Esophagus squamous epithelium (tissue), 5 donors: ENCODE measurements at regions of chr2 and their contacts with region 1.

Region 1: GRCh38 chr2:218876562-218877219 is 4.0 kb upstream of the WNT10A start:
- DNase-seq: no peak
- H3K4me3 ChIP-seq: no peak overlapping the region
- H3K27ac ChIP-seq: no peak overlapping the region
- H3K4me1 ChIP-seq: peaks cover 14 to 47% (median 17%) of the 10 kb centered on the region in 3 donors
- H3K27me3 ChIP-seq: peaks cover 0 to 98% (median 7%) of the 10 kb centered on the region in 4 donors
- CTCF ChIP-seq: peak; percentile 87 to 98 (median 94)
- POLR2A ChIP-seq: no peak

Region 2: GRCh38 chr2:218896501-218897393 is 20.1 kb after region 1 on chr2:
- intact Hi-C with region 1: loop called (anchors 2 kb)
- DNase-seq: no peak
- H3K4me3 ChIP-seq: peak overlapping the region in 3 of 4 donors; percentile 2 to 42 (median 29)
- H3K27ac ChIP-seq: peak overlapping the region; percentile 25 to 76 (median 56)
- H3K4me1 ChIP-seq: peaks cover 41 to 70% (median 41%) of the 10 kb centered on the region in 3 donors
- H3K27me3 ChIP-seq: peaks cover 0 to 97% (median 23%) of the 10 kb centered on the region in 4 donors
- CTCF ChIP-seq: no peak
- POLR2A ChIP-seq: no peak